Dorsolateral prefrontal cortex (tissue), 120 donors: ENCODE measurements at regions of chr2 and their contacts with region 1.

Region 1: GRCh38 chr2:86105252-86105968 is at the start of gene POLR1A:
- DNase-seq: peak; percentile 82 to 96 (median 94)
- H3K4me3 ChIP-seq: peak within 1 kb of the TSS; percentile 65 to 100 (median 93)
- H3K27ac ChIP-seq: peak within 1 kb of the TSS; percentile 68 to 98 (median 92)
- H3K27me3 ChIP-seq: no peaks in the 10 kb centered on the region
- CTCF ChIP-seq: peak in 14 of 56 donors; percentile 3 to 24 (median 11)
- total RNA-seq, gene POLR1A: 24.2 to 44.6 (median 34.2) TPM

Region 2: DNA sequence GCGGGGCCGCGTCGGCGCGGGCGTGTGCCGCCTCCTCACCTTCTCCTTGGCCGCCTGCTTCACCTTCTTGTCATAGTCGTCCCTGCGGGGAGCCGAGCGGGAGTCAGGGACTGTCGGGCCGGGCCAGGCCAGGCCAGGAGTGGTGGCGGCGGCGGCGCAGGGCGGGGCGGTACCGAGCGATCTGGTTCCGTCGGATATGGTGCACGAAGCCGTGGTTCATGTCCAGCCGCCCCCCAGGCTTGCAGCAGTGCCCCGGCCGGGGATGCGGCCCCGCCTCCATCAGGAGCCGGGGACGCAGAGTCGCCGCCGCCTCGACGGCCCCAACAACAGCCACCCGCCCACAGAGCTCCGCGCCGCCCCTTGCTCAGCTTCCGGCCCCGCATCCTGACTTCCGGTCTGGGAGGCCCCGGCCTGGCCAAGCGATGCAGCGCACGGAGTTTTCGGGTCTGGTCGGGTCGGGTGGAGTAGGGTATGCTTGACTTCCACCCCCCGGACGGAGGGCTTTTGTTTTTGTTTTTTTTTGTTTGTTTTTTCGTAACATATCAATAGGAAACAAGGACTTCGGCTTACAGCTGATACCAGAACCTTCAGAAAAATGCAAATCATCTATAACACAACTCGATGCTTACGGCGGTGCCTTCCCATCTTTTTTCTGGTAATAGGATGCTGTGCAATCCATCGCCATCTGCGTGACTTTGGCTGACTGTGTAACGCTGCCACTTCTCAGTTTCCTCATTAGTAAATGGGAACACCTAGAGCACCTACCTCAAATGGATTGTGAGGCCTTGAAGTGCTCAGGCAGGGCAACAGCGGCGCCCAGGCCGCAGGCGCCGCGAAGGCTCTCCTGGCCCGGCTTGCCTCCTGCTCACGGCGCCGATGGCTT is 493.5 kb before region 1 on chr2 and contains the start of gene C2orf68:
- intact Hi-C with region 1: loop called in 1 of 2 experiments (anchors 10 kb)
- DNase-seq: peak; percentile 77 to 95 (median 85)
- H3K4me3 ChIP-seq: peak within 1 kb of the TSS; percentile 63 to 97 (median 86)
- H3K27ac ChIP-seq: peak within 1 kb of the TSS; percentile 36 to 92 (median 84)
- H3K27me3 ChIP-seq: no peaks in the 10 kb centered on the region
- CTCF ChIP-seq: peak in 20 of 56 donors; percentile 8 to 44 (median 18)
- total RNA-seq, gene C2orf68: 10.2 to 50.7 (median 21.9) TPM

Region 3: DNA sequence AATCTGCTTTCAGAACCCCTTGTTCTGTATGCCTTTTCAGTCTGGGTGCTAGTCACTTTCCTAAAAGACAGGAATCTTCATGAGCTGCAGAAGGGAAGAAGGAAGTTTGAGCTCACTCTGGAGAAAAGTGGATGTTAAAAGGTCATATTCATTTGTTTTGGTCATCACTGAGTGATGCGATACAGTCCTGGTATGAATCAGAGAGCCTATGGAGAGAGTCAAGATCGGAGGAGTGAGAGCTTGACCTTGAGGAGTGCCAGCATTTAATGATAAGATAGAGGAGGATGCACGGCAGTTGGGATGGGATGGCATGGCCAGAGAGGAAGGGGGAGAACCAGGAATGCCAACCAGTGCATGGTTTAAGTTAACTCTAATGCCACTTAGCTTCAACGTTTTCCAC is 469.8 kb before region 1 on chr2:
- intact Hi-C with region 1: loop called in 1 of 2 experiments (anchors 5 kb)
- DNase-seq: no peak
- H3K4me3 ChIP-seq: no peak overlapping the region
- H3K27ac ChIP-seq: peak overlapping the region in 10 of 59 donors; percentile 10 to 56 (median 26)
- H3K27me3 ChIP-seq: no peaks in the 10 kb centered on the region
- CTCF ChIP-seq: no peak

Region 4: DNA sequence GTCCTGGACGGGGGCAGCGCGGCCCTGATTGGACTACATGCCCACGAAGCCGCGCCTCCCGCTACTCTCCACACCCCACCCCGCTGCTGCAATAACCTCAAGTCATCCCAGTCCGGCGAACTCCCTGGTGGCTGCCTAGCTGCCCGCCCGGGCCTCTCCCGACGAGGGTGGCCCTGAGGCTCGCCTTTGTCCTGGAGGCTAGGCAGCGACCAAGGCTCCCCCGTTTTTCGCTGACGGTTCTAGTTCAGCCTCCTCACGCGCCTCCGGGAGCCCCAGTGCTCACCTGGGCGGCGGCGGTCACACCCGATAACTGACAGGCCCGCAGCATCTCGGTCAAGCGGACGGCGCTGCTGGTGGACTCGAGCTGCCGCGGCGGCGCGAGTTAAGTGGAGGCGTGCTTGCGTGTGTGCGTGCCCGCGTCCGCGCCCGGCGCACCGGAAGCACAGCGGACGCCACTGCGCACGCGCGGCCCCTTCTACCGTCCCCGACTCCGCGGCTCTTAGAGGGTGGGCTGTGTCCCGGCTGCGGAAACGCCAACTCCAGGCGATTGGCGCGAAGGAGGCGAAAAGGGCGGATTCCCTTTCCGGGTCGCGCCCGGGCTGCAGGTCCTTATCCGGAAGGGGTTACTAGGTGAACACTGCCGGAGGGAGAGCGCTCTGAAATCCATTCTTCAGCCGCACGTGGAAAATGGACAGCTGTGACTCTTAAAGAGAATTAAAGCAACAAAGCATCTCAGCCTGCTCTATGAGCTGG is 89.8 kb after region 1 on chr2 and contains the start of gene IMMT:
- intact Hi-C with region 1: loop called (anchors 5 to 10 kb)
- DNase-seq: peak; percentile 92 to 99 (median 96)
- H3K4me3 ChIP-seq: peak within 1 kb of the TSS; percentile 57 to 100 (median 97)
- H3K27ac ChIP-seq: peak within 1 kb of the TSS; percentile 63 to 99 (median 97)
- H3K27me3 ChIP-seq: no peaks in the 10 kb centered on the region
- CTCF ChIP-seq: peak in 28 of 56 donors; percentile 6 to 44 (median 22)
- total RNA-seq, gene IMMT: 46.6 to 117 (median 78.3) TPM